ENCODE measurements at regions of chrX and their contacts with region 1.

Region 1: DNA sequence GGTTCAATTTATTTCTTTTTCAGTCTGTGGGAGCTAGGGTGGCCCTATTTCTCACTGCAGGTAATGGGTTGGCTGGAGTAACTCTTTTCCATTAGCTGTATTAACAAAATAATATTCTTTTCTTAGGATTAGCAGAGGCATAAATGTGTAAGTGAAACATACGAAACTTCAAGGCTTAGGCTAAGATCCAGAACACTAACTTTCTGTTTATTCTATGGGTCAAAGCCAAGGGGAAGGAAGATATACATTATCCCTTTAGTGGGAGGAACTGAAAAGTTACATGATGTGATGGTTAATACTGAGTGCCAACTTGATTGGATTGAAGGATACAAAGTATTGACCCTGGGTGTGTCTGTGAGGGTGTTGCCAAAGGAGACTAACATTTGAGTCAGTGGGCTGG is 66.4 kb downstream of the DCAF8L2 start:
- DNase-seq: no peak
- H3K4me3 ChIP-seq: no peak overlapping the region
- H3K27ac ChIP-seq: no peak overlapping the region
- H3K4me1 ChIP-seq: no peaks in the 10 kb centered on the region
- H3K27me3 ChIP-seq: no peaks in the 10 kb centered on the region
- CTCF ChIP-seq: no peak

Region 2: DNA sequence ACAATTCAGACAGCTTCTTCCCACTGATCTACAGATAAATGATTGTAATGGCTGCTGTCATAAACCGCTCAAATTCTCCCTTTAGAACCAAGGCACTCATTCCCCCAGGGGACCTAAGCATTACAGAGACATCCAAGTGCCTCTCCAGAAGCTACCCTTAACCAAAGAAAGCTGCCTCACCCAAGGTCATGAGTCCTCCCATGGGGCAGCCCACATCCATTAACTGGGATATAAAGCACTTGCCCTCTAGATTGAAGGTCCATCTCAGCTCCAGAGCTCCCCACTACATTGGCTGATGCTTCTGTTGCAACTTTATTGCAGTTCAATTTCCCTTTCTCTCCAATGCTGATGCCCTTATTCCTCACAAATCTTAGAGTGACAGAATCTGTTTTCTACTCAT is 106.9 kb before region 1 on chrX:
- CTCF ChIA-PET with region 1: interaction called, 10 read pairs
- POLR2A ChIA-PET with region 1: no interaction called
- intact Hi-C with region 1: no loop called
- DNase-seq: no peak
- H3K4me3 ChIP-seq: no peak overlapping the region
- H3K27ac ChIP-seq: no peak overlapping the region
- H3K4me1 ChIP-seq: no peaks in the 10 kb centered on the region
- H3K27me3 ChIP-seq: no peaks in the 10 kb centered on the region
- CTCF ChIP-seq: no peak

Measured in PC-9 (cell line).